ENCODE measurements at regions of chr5 and their contacts with region 1.

Region 1: DNA sequence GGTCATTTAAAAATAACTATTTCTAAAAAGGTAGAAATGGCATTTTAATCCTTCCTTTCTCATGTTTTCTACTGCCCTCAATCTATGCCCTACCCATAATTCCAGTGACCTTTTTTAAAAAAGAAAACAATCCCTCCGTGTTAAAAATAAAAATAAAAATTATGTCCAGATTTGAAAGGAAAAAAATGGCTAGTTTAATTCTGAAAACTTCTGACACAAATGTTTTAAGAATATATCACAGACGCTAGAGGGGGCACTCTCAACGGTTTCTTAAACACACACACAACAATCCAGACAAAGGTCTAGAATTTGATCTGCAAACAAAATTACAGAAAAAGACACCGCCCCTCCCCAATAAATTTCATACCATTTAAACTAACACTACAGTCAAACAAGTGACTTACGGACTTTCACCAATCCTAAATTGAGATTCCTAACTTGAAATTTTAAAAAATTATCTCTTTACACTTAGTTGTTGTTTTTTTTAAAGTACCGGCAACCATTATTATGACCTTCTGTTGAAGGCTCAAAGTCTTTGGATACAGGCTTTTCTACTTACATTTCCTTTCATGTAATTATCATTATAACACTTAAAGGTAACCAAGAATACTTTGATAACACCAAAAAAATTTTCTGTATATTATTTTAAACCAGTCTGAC is 38.2 kb downstream of the CLINT1 start:
- DNase-seq: no peak

Region 2: DNA sequence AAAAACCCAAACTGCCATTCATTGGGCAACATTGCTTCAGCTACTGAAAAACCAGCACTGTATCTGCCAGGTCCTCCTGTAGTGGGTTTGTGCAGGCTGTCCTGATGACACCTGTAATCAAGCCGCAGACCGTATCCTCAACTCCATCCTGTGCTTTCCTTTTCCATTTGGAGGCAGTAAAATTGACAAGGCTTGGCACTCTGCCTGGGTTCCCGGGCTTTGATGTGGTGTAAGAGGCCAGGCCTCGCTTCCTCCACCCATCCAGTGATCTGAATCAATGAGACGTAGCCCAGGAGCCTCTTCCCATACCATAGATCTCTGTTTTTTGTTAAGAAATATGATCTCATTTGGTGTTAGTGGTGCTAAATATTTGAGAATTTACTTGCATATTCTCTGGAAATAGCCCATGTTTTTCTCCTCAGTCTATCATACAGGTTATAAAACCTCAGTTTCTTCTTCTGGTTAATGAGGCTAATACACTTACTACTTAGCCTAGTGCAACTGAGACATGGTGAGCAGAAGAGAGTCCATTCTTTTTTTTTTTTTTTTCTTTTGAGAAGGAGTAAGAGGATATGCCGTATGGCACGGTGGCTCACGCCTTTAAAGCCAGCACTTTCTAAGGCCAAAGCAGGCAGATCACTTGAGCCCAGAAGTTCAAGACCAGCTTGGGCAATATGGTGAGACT is 42.5 kb before region 1 on chr5:
- intact Hi-C with region 1: no loop called
- DNase-seq: no peak

Region 3: DNA sequence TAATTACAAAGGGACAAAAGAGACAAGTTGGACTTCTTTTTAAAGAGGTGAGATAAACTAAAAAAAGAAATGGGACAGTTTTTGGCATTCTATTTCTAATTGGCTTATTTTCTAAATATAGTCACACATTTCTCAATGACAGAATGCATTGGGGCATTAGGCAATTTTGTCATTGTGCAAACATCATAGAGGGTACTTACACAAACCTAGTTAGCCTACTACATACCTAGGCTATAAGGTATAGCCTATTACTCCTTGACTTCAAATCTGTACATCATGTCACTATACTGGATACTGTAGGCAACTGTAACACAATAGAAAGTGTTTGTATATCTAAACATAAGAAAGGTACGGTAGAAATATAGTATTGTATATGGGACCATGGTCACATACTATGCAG is 21.1 kb before region 1 on chr5:
- intact Hi-C with region 1: no loop called
- DNase-seq: no peak

Region 4: GRCh38 chr5:157858527-157859226 is 38.0 kb after region 1 on chr5 and contains the start of gene CLINT1:
- intact Hi-C with region 1: loop called (anchors 5 kb)
- DNase-seq: peak; percentile 97
- total RNA-seq, gene CLINT1: 53.0 TPM

Region 5: DNA sequence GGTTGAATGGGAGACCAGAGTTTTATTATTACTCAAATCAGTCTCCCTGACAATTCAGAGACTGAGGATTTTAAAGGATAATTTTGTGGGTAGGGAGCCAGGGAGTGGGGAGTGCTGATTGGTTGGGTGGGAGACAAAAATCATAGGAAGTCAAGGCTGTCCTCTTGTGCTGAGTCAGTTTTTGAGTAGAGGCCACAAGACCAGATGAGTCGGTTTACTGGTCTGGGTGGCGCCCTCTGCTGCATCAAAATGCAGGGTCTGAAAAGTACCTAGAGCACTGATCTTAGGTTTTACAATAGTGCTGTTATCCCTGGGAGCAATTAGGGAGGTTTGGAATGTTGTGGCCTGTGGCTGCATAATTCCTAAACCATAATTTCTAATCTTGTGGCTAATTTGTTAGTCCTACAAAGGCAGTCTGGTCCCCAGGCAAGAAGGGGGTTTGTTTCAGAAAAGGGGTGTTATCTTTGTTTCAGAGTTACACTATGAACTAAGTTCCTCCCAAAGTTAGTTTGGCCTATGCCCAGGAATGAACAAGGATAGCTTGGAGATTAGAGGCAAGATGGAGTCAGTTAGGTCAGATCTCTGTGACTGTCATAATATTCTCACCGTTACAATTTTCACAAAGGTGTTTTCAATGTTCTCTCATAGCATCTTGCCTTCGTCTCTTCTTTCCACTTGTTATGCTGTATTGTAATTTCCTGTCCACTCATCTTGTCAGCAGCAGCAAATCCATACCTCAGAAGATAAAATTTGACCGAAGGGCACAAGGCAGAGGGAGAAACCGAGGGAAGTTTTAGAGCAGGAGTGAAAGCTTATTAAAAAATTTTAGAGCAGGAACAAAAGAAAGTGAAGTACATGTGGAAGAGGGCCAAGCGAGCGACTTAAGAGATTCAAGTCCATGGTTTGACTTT is 97.4 kb after region 1 on chr5:
- intact Hi-C with region 1: loop called (anchors 5 kb)
- DNase-seq: no peak

Region 6: DNA sequence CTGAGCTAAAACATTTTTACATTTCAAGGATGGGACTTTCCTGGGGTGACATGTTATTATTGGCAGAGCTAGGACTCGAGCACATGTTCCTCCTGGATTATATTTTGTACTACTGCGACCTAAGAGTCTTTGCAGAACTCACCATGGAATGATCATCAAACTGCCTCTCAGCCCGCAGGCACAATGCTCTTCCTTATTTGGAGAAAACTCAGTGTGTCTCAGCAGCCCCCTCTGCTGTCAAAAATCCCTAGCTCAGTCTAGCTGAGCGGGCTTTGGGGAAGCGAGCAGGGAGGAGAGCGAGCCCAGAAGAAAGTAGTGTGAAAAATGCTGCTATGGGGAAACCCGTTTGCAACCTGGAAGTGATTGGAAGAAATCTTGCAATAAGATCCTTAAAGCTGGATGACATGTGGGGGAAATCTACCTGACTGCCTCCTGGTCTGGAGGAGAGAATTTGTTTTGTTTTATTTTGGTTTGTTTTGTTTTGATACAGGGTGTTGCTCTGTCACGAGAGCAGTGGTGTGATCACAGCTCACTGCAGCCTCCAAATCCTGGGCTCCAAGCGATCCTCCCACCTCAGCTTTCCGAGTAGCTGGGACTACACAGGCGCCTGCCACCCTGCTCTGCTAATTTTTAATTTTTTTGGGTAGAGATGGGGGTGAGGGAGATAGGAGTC is 128.2 kb after region 1 on chr5:
- intact Hi-C with region 1: loop called (anchors 5 kb)
- DNase-seq: peak; percentile 89

Region 7: DNA sequence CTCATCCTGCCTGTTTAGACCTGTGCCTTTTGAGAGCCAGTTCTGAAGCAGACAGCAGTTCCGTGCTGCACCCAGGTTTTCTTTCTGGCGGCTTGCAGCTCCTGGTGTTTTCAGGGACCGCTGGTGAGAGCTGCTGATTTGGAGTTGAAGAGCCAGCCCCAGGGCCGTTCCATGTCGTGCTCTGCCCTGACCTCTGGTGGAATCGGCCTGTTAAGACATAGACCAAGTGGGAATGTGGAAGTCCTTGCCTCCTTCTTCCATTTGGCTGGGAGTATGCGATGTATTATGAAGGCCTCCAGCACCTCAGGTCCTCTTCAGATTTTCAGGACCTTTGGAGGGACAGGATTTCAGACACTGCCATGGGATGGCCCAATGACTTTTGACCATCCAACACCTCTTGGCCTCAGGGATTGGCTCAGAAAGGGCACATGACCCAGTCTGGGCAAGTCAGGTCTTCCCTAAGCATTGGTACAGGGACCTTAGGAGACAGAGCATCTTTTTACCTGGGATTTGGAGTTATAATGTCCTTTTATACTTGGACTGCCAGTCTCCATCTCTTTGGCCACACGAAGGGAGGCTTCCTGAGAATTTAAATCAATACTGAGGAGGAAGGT is 174.3 kb after region 1 on chr5:
- intact Hi-C with region 1: loop called (anchors 2 kb)
- DNase-seq: no peak

Measured in cardiac septum (tissue), 1 donor.